ENCODE measurements at regions of chr2 and their contacts with region 1.

Region 1: GRCh38 chr2:88554189-88554588 is 73.1 kb downstream of the EIF2AK3 start:
- DNase-seq: peak; percentile 8
- H3K4me3 ChIP-seq: no peak overlapping the region
- H3K27ac ChIP-seq: no peak overlapping the region
- H3K4me1 ChIP-seq: peaks cover 4% of the 10 kb centered on the region
- H3K27me3 ChIP-seq: no peaks in the 10 kb centered on the region
- CTCF ChIP-seq: peak; percentile 39 to 73

Region 2: GRCh38 chr2:88489200-88489599 is 65.0 kb before region 1 on chr2:
- CTCF ChIA-PET with region 1: no interaction called
- dilution Hi-C with region 1: no loop called
- in situ Hi-C with region 1: no loop called
- intact Hi-C with region 1: loop called (anchors 1 kb)
- DNase-seq: no peak
- H3K4me3 ChIP-seq: no peak overlapping the region
- H3K27ac ChIP-seq: no peak overlapping the region
- H3K4me1 ChIP-seq: peaks cover 11% of the 10 kb centered on the region
- H3K27me3 ChIP-seq: no peaks in the 10 kb centered on the region
- CTCF ChIP-seq: peak in 1 of 2 donors; percentile 37

Region 3: DNA sequence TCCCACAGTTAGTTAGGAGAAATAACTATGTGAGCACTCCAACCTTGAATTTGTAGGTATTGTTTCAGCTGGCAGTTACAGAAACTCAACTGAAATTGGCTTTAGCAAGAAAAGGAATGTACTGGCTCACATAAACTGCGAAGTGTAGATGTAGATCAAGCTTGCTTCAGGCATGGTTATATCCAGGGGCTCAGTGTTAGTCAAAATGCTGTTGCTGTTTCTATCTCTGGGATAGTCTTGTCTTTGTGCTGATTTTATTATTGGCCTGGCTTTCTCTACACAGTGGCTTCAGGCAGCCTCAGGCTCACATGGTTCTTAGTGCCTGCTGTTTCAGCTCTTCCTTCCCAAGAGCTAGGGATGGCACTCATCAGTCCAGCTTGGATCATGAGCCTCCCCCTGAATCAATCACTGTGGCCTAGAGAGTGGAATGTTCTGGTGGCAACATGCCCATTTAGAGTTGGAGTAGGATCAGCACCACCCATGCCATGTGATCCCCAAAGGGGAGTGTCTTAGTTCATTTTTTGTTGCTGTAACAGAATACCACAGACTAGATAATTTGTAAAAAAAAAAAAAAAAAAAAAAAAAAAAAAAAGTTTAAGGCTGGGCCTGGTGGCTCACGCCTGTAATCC is 32.6 kb before region 1 on chr2:
- CTCF ChIA-PET with region 1: no interaction called
- dilution Hi-C with region 1: no loop called
- in situ Hi-C with region 1: no loop called
- intact Hi-C with region 1: no loop called
- DNase-seq: peak; percentile 33
- H3K4me3 ChIP-seq: no peak overlapping the region
- H3K27ac ChIP-seq: no peak overlapping the region
- H3K4me1 ChIP-seq: no peaks in the 10 kb centered on the region
- H3K27me3 ChIP-seq: no peaks in the 10 kb centered on the region
- CTCF ChIP-seq: no peak

Region 4: DNA sequence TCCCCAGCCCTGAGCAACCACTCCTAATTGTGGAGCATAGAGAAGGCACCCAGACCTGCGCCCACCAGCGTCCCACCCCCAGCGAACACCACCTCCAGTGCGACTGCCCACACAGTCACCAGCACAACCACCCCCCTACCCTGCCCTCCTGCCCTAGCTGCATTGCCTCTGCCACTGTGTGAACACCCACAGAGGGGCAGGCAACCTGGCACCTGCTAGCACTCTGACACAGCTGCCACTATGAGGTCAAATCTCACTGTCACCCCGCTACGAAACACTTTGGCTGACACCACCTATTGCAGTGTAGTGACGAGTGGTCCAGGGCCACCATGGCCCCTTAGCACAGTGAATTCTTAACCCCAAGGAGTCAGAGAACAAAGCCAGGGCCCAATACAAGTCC is 87.1 kb after region 1 on chr2:
- CTCF ChIA-PET with region 1: no interaction called
- dilution Hi-C with region 1: no loop called
- in situ Hi-C with region 1: no loop called
- intact Hi-C with region 1: no loop called
- DNase-seq: no peak
- H3K4me3 ChIP-seq: no peak overlapping the region
- H3K27ac ChIP-seq: no peak overlapping the region
- H3K4me1 ChIP-seq: peaks cover 17% of the 10 kb centered on the region
- H3K27me3 ChIP-seq: no peaks in the 10 kb centered on the region
- CTCF ChIP-seq: no peak